ENCODE measurements at regions of chr12 and their contacts with region 1.

Region 1: GRCh38 chr12:74689071-74689655 is 151.5 kb downstream of the ATXN7L3B start:
- DNase-seq: peak; percentile 8
- H3K4me3 ChIP-seq: no peak overlapping the region
- H3K27ac ChIP-seq: no peak overlapping the region
- H3K27me3 ChIP-seq: no peaks in the 10 kb centered on the region
- CTCF ChIP-seq: peak; percentile 64

Region 2: GRCh38 chr12:75289753-75290152 is 600.6 kb after region 1 on chr12:
- CTCF ChIA-PET with region 1: interaction called, 17 read pairs
- POLR2A ChIA-PET with region 1: no interaction called
- DNase-seq: no peak
- H3K4me3 ChIP-seq: no peak overlapping the region
- H3K27ac ChIP-seq: no peak overlapping the region
- H3K27me3 ChIP-seq: no peaks in the 10 kb centered on the region
- CTCF ChIP-seq: peak; percentile 37

Region 3: DNA sequence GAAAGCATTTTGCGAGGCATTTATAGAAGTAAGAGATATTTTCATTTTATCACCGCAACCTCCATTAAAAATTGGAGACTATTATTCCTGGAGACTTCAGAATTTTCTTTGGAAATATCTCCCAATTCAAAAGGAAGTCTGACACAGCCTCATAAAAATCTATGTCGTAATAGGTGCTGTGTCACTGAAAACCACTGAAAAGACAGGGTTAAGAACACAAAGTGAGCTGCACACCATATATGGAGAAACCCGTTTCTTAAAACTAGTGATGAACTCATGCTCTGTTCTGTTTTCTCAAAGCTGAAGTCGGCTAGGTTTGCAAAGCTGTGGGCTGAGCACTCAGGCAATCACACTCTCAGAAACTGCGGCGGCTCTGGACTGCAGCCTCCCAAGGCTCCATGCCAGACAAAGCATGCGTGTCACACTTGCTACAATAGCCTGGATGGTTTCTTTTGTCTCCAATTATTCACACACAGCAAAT is 791.3 kb after region 1 on chr12 and contains the start of gene GLIPR1:
- CTCF ChIA-PET with region 1: interaction called, 11 read pairs
- POLR2A ChIA-PET with region 1: no interaction called
- DNase-seq: peak; percentile 97
- H3K4me3 ChIP-seq: peak within 1 kb of the TSS; percentile 73
- H3K27ac ChIP-seq: peak within 1 kb of the TSS; percentile 89
- H3K27me3 ChIP-seq: no peaks in the 10 kb centered on the region
- CTCF ChIP-seq: no peak
- polyA plus RNA-seq, gene GLIPR1: 299 and 335 TPM in 2 replicates